Heart right ventricle (tissue), 16 donors: ENCODE measurements at regions of chr17 and their contacts with region 1.

Region 1: DNA sequence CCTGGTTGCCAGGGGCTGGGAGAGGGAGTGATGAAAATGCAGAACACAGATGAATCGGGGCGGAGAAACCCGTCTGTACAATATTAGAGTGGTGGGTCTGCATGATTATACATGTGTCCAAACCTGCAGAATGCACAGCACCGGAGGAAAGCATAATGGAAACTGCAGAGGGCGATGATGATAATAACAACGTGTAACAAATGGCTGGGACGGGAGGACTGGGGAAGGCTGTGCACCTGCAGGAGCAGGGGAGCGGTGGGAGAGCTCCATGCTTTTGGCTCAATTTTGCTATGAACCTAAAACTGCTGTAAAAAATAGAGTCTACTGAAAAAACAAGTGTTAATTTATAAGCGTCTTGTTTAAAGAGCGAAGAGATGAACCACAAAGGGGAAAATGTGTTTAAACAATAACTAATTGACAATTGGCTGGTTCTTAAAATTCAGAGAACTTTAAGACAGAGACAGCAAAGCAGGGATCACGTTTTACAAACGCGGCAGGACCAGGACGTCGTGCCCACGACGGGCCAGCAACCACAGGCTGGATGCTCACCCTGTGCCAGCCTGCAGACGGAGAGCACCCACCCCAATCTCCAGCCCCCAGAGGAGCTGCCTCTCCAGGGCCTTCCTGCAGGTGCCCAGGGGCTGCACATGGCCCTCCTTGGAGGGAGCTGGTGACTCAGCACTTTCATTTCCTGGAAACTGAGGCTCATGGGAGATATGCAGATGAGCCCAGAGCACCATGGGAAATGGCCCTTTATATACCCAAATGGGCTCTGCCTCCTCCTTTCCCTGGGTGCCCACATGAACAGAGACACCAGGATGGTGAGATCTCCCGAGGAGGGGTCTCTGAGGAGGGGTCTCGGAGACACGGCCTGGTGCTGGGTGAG is at the start of gene TEX19:
- DNase-seq: no peak
- ATAC-seq: no peak
- H3K4me3 ChIP-seq: no peak within 1 kb of the TSS
- H3K27ac ChIP-seq: no peak within 1 kb of the TSS
- H3K4me1 ChIP-seq: no peaks in the 10 kb centered on the region
- H3K27me3 ChIP-seq: peaks cover 6 to 47% (median 28%) of the 10 kb centered on the region in 7 donors
- CTCF ChIP-seq: no peak
- total RNA-seq, gene TEX19: not detected

Region 2: DNA sequence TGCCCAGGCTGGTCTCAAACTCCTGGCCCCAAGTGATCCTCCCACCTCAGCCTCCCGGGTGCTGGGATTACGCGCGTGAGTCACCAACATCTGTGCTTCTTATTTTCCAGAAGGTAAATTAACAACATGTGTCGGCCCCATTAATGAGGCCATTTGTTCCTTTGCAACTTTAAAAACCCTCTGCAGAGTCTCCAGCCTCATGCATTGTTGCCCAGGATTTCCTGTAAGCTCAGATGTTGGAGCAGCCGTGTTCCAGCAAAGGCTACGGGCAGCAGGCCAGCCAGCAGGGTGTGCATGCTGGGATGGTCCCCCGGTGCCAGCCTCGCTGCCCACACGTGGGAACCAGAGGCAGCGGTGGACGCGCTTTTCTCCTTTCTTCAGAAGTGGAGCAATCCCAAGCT is 40.3 kb after region 1 on chr17:
- intact Hi-C with region 1: loop called in 1 of 10 experiments (anchors 5 kb)
- DNase-seq: no peak
- ATAC-seq: peak; percentile 36 to 63 (median 48)
- H3K4me3 ChIP-seq: no peak overlapping the region
- H3K27ac ChIP-seq: peak overlapping the region in 2 of 10 donors; percentile 22 to 51
- H3K4me1 ChIP-seq: peaks cover 0 to 35% (median 0%) of the 10 kb centered on the region in 9 donors
- H3K27me3 ChIP-seq: no peaks in the 10 kb centered on the region
- CTCF ChIP-seq: no peak